Naive thymus-derived CD4-positive, alpha-beta T cell (primary cell): ENCODE measurements at regions of chr7 and their contacts with region 1.

Region 1: DNA sequence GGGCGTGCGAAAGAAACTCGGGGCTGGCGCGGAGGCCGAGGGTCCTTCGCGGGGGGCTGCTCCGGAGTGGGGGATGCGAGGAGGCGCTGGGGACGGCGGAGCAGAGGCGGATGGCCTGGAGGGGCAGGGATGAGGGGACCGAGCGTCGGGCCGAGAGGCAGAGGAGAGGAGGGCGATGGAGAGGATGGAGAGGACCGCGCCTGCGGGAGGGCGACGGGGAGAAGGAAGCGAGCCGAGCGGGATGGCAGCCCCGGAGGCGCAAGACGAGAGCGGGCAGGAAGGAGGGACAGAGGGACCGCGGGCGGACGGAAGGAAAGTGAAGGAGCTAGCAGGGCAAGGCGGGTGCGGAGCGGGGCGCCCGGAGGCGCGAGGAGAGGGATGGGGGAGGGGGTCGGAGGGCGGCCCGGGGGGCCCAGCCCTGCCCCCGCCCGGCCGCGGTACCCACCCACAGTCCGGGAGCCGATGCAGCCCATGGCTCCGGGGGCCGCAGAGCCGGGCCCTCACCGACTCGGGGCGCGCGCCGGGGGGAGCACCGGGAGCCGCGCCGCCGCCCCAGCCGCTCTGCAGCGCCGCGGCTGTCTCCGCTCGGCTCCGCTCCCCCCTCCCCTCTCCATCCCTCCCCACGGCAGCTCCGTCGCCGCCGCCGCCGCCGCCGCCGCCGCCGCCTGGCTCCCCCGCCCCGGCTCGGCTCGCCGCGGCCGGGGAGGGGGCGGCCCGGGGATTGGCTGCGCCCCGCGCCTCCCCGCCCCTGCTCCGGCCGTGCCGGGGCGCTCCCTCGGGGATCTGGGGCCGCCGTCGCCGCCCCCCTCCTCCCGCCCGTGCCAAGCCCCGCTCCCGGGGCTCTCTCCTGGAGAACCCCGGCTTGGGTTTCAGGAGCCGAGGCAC is at the start of gene FAM131B:
- DNase-seq: peak in 2 of 9 donors; percentile 31 to 34
- ATAC-seq: peak; percentile 83
- H3K4me3 ChIP-seq: peak within 1 kb of the TSS; percentile 59
- H3K4me3 Mint-ChIP-seq: peak within 1 kb of the TSS; percentile 59 to 91 (median 85)
- H3K27ac ChIP-seq: no peak within 1 kb of the TSS
- H3K27ac Mint-ChIP-seq: peak within 1 kb of the TSS in 3 of 9 donors; percentile 34 to 68 (median 41)
- H3K4me1 ChIP-seq: peaks cover 6% of the 10 kb centered on the region in 2 donors
- H3K4me1 Mint-ChIP-seq: peaks cover 3 to 17% (median 9%) of the 10 kb centered on the region in 7 donors
- H3K27me3 ChIP-seq: peaks cover 5 to 6% of the 10 kb centered on the region in 2 donors
- H3K27me3 Mint-ChIP-seq: peaks cover 19 to 81% (median 33%) of the 10 kb centered on the region in 5 donors
- total RNA-seq, gene FAM131B: 0.19 to 1.4 (median 0.53) TPM in 3 of 5 experiments, not detected in the others

Region 2: DNA sequence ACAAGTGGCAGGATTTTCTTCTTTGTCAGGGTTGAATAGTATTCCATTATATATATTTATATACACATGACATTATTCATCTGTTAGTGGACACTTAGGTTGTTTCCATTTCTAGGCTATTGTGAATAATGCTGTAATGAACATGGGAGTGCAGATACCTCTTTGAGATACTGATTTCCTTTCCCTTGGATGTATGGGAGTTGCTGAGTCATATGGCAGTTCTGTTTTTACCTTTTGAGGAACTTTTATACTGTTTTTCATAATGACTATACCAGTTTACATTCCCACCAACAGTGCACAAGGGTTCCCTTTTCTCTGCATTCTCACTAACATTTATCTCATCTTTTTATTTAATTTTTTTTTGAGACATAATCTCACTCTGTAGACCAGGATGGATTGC is 48.2 kb before region 1 on chr7:
- CTCF ChIA-PET with region 1: no interaction called
- POLR2A ChIA-PET with region 1: no interaction called
- intact Hi-C with region 1: loop called in 1 of 2 experiments (anchors 5 kb)
- DNase-seq: no peak
- ATAC-seq: no peak
- H3K4me3 ChIP-seq: no peak overlapping the region
- H3K4me3 Mint-ChIP-seq: no peak overlapping the region
- H3K27ac ChIP-seq: no peak overlapping the region
- H3K27ac Mint-ChIP-seq: no peak overlapping the region
- H3K4me1 ChIP-seq: peaks cover 5 to 6% of the 10 kb centered on the region in 2 donors
- H3K4me1 Mint-ChIP-seq: peaks cover 12 to 40% (median 20%) of the 10 kb centered on the region in 7 donors
- H3K27me3 ChIP-seq: no peaks in the 10 kb centered on the region
- H3K27me3 Mint-ChIP-seq: peaks cover 0 to 10% (median 0%) of the 10 kb centered on the region in 5 donors